SK-N-SH (cell line): ENCODE measurements at regions of chr20 and their contacts with region 1.

Region 1: DNA sequence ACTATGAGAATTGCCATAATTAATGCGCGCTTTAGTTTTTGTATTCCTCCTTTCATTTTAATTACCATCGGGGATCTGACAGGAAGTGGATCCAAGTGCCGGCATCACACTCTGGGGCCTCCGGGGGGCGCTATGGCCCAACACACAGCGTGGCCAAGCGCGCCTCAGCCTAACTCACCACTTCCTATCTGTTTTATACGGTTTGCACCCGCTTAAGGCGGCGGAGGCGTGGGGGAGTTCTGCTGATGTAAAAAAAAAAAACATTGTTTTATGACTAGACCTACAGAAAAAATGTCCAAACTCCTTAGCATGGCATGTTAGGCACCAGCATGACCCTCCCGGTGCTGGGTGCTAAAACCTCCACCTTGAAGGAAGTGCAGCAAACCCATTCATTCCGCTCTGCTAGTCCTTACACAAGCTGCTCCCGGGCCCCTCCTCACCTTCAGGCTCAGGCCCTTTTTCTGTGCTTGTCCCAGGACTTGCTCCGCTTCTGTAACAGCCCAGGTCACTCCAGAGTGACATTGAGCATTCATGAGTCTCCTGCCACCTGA is 4.5 kb upstream of the EBF4 start:
- DNase-seq: peak; percentile 76
- H3K4me3 ChIP-seq: peak overlapping the region in 1 of 2 experiments; percentile 39; a peak in 1 of 4 replicates
- H3K27ac ChIP-seq: no peak overlapping the region
- H3K4me1 ChIP-seq: peaks cover 0 to 15% of the 10 kb centered on the region in 2 experiments; a peak in 1 of 4 replicates
- H3K27me3 ChIP-seq: no peaks in the 10 kb centered on the region
- CTCF ChIP-seq: peak; percentile 74
- EP300 ChIP-seq: no peak
- RAD21 ChIP-seq: peak; percentile 78

Region 2: GRCh38 chr20:2671977-2672376 is 16.1 kb before region 1 on chr20:
- CTCF ChIA-PET with region 1: interaction called, 16 read pairs
- POLR2A ChIA-PET with region 1: no interaction called
- DNase-seq: no peak
- H3K4me3 ChIP-seq: no peak overlapping the region
- H3K27ac ChIP-seq: no peak overlapping the region
- H3K4me1 ChIP-seq: no peaks in the 10 kb centered on the region
- H3K27me3 ChIP-seq: no peaks in the 10 kb centered on the region
- CTCF ChIP-seq: 0 out of 2 replicates have a peak, but pooled peaks have one; percentile 19
- EP300 ChIP-seq: no peak
- RAD21 ChIP-seq: no peak

Region 3: GRCh38 chr20:2729251-2729713 is 41.2 kb after region 1 on chr20:
- CTCF ChIA-PET with region 1: interaction called, 11 read pairs
- POLR2A ChIA-PET with region 1: no interaction called
- DNase-seq: peak; percentile 57
- H3K4me3 ChIP-seq: no peak overlapping the region
- H3K27ac ChIP-seq: peak overlapping the region in 1 of 2 experiments; percentile 65; a peak in 2 of 4 replicates
- H3K4me1 ChIP-seq: peaks cover 0 to 16% of the 10 kb centered on the region in 2 experiments; a peak in 2 of 4 replicates
- H3K27me3 ChIP-seq: no peaks in the 10 kb centered on the region
- CTCF ChIP-seq: no peak
- EP300 ChIP-seq: no peak
- RAD21 ChIP-seq: no peak

Region 4: GRCh38 chr20:2849529-2849928 is 161.4 kb after region 1 on chr20:
- CTCF ChIA-PET with region 1: interaction called, 22 read pairs
- POLR2A ChIA-PET with region 1: no interaction called
- DNase-seq: no peak
- H3K4me3 ChIP-seq: no peak overlapping the region
- H3K27ac ChIP-seq: no peak overlapping the region
- H3K4me1 ChIP-seq: peaks cover 0 to 2% of the 10 kb centered on the region in 2 experiments; a peak in 1 of 4 replicates
- H3K27me3 ChIP-seq: no peaks in the 10 kb centered on the region
- CTCF ChIP-seq: no peak
- EP300 ChIP-seq: no peak
- RAD21 ChIP-seq: no peak